Heart right ventricle (tissue), 16 donors: ENCODE measurements at regions of chr11 and their contacts with region 1.

Region 1: DNA sequence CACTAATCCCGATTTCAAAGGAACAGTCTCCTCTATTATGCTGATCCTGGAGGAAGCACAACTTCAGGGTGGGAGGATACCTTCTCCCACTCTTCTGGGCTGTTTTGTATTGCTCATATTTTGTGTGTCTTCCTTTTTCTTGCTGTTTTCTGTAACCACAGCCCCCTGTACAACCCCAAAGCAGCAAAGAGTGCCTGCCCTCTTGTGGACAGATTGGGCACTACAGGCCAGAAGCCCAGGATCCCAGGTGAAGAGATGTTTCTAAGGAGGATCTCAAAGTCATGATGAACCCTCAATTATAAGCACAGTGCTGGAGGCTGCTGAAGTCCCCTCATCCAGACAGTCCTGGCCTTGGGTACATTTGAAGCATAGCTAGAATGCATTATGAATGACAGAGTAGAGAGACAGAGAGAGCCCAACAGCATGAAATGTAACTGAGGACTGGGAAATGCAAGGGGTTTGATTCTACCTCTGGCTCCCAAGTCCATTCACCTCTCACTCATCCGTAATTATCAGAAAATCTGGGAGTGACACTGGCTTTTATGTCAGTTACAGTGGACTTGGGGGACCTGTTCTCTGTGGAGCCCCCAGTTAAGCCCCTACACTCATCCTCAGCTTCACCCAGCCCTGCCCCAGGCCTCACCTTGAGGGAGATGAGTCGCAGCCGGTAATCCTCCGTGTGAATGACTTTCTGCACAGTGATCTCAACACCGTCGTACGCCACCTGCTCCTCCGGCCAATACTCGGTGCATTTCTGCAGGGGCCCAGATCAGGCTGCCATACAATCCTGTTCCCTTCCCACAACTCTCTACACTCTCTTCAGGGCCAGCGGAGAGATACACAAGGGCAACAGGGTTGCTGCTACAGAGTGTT is 6.2 kb upstream of the IGSF22 start:
- DNase-seq: peak; percentile 23 to 48
- ATAC-seq: peak in 6 of 8 donors; percentile 45 to 67 (median 56)
- H3K4me3 ChIP-seq: no peak overlapping the region
- H3K27ac ChIP-seq: no peak overlapping the region
- H3K4me1 ChIP-seq: peaks cover 0 to 8% (median 0%) of the 10 kb centered on the region in 9 donors
- H3K27me3 ChIP-seq: peaks cover 0 to 9% (median 0%) of the 10 kb centered on the region in 7 donors
- CTCF ChIP-seq: peak; percentile 94 to 98 (median 95)

Region 2: DNA sequence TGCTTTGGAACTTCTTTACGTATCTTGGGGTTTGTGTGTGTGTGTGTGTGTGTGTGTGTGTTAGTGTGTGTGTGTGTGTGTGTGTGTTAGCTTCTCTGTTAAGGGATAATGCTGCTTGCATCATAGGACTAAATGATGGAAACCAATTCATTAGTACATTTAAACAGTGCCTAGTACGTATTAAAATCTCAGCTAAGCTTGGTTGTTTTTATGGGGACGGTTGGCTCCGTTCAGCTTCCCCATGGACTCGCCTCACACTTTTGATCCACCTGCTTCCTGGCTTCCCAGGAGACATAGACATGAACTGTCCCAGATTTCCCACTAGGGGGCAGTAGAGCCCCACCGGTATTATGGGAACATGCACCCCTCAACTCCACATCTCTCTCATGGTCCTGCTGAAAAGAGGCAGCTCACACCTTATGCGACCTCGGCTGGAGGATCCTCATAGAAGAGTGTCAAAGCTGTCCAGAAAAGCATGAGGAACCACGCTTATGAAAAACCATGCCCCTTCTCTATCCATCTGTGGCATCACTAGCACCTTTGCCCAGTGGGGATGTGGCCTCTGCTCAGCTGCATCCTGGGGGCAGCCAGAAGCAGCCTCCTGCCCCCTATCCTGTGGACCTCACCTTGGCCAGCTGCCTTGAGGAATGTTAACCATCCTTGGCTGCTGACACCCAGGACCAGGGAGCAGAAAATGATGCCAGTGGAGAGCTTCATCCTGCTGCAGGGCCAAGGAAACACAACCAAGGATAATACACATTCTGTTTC is 616.6 kb before region 1 on chr11:
- intact Hi-C with region 1: loop called in 4 of 10 experiments (anchors 10 kb)
- DNase-seq: peak in 1 of 2 donors; percentile 32
- ATAC-seq: peak; percentile 65 to 82 (median 73)
- H3K4me3 ChIP-seq: no peak overlapping the region
- H3K27ac ChIP-seq: no peak overlapping the region
- H3K4me1 ChIP-seq: no peaks in the 10 kb centered on the region
- H3K27me3 ChIP-seq: peaks cover 0 to 31% (median 19%) of the 10 kb centered on the region in 7 donors
- CTCF ChIP-seq: peak; percentile 75 to 91 (median 84)

Region 3: DNA sequence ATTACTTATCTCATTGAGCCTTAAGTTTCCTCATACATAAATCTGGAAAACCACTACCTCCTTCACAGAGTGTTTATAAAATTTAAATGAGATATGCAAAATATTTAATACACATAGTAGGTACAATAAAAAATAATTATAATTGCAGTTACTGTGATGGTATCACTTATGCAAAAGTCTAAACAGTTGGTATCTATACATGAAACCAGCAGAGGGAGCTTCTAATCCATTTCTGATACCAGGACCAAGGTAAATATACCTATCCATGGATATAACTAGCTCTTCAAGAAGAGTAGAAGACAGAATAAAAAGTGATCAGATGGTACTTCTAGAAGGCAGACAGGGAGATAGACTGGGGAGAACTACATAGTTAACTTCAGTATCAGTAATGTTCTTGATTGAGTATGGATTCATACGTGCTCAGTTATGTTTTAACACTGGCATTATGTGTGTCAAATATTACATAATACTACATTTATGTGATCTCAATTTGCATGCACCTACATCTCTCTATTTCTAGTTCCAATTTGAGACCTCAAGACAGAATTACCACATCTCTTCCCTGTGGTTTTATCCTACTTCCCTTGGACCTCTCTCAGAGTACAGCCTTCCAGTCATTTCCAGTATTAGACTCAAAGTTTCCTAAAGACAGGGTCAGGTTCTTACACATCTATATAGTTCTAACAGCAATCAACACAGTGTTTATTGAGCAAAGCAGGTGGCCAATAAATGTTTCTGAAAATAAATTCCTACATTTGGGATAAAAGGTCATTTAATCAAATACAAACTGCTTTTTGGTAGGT is 191.8 kb before region 1 on chr11:
- intact Hi-C with region 1: loop called in 5 of 10 experiments (anchors 5 to 10 kb)
- DNase-seq: no peak
- ATAC-seq: no peak
- H3K4me3 ChIP-seq: no peak overlapping the region
- H3K27ac ChIP-seq: no peak overlapping the region
- H3K4me1 ChIP-seq: no peaks in the 10 kb centered on the region
- H3K27me3 ChIP-seq: no peaks in the 10 kb centered on the region
- CTCF ChIP-seq: peak in 7 of 9 donors; percentile 18 to 56 (median 47)